K562 (cell line): ENCODE measurements at regions of chr11 and their contacts with region 1.

Region 1: GRCh38 chr11:46506483-46506791 is 87.4 kb downstream of the AMBRA1 start:
- DNase-seq: no peak
- ATAC-seq: no peak
- H3K4me3 ChIP-seq: no peak overlapping the region
- H3K27ac ChIP-seq: no peak overlapping the region
- H3K4me1 ChIP-seq: peaks cover 13 to 35% of the 10 kb centered on the region in 2 experiments
- H3K27me3 ChIP-seq: no peaks in the 10 kb centered on the region
- CTCF ChIP-seq: no peak
- EP300 ChIP-seq: no peak
- POLR2A ChIP-seq: no peak
- RAD21 ChIP-seq: no peak

Region 2: DNA sequence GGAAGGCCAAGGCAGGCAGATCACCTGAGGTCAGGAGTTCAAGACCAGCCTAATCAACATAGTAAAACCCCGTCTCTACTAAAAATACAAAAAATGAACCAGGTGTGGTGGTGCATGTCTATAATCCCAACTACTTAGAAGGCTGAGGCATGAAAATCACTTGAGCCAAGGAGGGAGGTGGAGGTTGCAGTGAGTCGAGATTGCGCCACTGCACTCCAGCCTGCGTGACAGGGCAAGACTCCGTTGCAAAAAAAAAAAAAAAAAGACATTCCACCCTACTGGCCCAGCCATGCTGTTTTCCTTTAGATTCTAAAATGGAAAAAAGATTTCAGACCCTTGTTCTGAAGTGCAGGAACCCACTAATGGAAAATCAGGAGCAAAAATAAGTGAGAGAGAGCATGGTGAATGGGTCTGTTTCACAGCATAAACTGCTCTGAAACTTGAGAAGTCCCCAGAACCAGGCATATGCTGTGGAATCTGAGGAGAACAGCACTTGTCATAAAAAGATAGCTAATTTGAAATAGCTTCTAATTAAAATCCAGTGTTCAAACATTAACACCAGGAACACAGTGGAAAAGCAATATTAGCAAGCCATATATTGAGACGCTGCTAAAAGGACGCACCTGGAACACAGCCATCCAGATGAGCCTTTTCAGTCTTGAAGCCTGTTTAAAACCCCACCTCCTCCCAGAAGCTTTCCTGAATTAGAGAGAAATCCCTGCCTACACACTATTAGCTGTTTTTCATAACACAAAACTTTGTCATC is 48.6 kb before region 1 on chr11:
- CTCF ChIA-PET with region 1: no interaction called
- POLR2A ChIA-PET with region 1: no interaction called
- in situ Hi-C with region 1: no loop called
- intact Hi-C with region 1: no loop called
- DNase-seq: no peak
- ATAC-seq: peak; percentile 39; the same call in 2 of the 3 replicates
- H3K4me3 ChIP-seq: no peak overlapping the region
- H3K27ac ChIP-seq: no peak overlapping the region
- H3K4me1 ChIP-seq: peaks cover 0 to 4% of the 10 kb centered on the region in 2 experiments; a peak in 3 of 5 replicates
- H3K27me3 ChIP-seq: no peaks in the 10 kb centered on the region
- CTCF ChIP-seq: no peak
- EP300 ChIP-seq: no peak
- POLR2A ChIP-seq: no peak
- RAD21 ChIP-seq: no peak

Region 3: GRCh38 chr11:46519351-46519750 is 12.9 kb after region 1 on chr11:
- CTCF ChIA-PET with region 1: no interaction called
- POLR2A ChIA-PET with region 1: interaction called, 11 read pairs
- in situ Hi-C with region 1: no loop called
- intact Hi-C with region 1: no loop called
- DNase-seq: no peak
- ATAC-seq: no peak
- H3K4me3 ChIP-seq: no peak overlapping the region
- H3K27ac ChIP-seq: no peak overlapping the region
- H3K4me1 ChIP-seq: peaks cover 0 to 4% of the 10 kb centered on the region in 2 experiments; a peak in 1 of 5 replicates
- H3K27me3 ChIP-seq: no peaks in the 10 kb centered on the region
- CTCF ChIP-seq: no peak
- EP300 ChIP-seq: no peak
- POLR2A ChIP-seq: no peak
- RAD21 ChIP-seq: no peak

Region 4: DNA sequence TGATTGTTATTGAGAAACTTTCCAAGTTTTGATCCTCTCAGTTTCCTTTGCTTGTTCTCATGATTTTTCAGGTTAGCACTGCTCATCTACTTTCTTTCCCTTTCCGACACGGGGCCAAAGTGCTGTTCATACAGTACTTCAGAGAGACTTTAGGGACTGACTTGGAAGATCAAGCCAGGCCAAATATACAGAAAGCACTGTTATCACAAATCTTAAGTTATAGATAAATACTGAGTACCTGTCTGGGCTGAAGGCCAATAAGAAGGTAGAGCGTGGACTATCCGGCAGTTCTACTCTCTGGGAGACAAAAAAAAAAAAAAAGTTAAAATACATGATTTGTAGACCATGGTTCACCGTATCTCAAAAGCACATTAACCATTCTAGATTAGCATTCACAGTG is 41.1 kb after region 1 on chr11:
- CTCF ChIA-PET with region 1: no interaction called
- POLR2A ChIA-PET with region 1: no interaction called
- in situ Hi-C with region 1: no loop called
- intact Hi-C with region 1: no loop called
- DNase-seq: no peak
- ATAC-seq: no peak
- H3K4me3 ChIP-seq: no peak overlapping the region
- H3K27ac ChIP-seq: no peak overlapping the region
- H3K4me1 ChIP-seq: peaks cover 4% of the 10 kb centered on the region in 2 experiments; a peak in 3 of 5 replicates
- H3K27me3 ChIP-seq: no peaks in the 10 kb centered on the region
- CTCF ChIP-seq: no peak
- EP300 ChIP-seq: no peak
- POLR2A ChIP-seq: no peak
- RAD21 ChIP-seq: no peak